A673 (cell line): ENCODE measurements at regions of chr9 and their contacts with region 1.

Region 1: DNA sequence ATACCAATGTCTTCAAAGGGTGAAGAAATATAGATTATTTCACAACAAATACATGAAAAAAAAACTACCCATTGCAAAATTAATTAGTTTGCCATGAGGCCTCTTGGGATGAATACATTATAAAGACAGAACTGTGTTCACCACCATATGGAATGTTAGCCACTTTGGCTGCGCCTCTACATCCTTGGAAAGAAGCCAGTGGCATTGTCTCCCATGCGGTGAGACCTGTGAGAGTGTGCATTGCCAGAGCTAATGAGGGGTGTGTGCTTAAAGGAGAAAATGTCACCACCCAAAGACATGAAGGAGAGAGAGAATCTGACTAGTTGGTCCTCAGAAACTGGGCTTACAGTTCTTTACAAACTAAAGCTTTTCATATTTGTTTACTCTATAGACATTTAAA is 110.6 kb downstream of the PLPPR1 start:
- DNase-seq: peak; percentile 3
- H3K4me3 ChIP-seq: no peak overlapping the region
- H3K27ac ChIP-seq: no peak overlapping the region
- H3K4me1 ChIP-seq: no peaks in the 10 kb centered on the region
- H3K27me3 ChIP-seq: no peaks in the 10 kb centered on the region
- CTCF ChIP-seq: no peak

Region 2: DNA sequence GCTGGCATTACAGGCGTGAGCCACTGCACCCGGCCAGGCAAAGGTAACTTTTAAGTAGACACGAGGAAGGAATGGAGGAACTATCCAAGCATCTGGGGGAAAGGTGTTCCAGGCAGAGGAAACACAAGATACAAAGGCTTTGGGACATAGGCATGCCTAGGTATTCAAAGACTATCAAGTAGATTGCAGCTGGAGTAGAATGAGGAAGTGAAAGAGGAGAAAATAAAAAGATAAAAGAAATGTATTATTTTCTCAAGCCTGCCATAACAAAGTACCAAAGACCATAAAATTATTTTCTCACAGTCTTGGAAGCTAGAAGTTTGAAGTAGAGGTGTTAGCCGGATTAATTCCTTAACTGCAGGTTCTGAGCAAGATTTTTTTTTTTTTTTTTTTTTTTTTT is 639.2 kb after region 1 on chr9:
- CTCF ChIA-PET with region 1: no interaction called
- POLR2A ChIA-PET with region 1: interaction called, 16 read pairs
- intact Hi-C with region 1: no loop called
- DNase-seq: no peak
- H3K4me3 ChIP-seq: no peak overlapping the region
- H3K27ac ChIP-seq: no peak overlapping the region
- H3K4me1 ChIP-seq: no peaks in the 10 kb centered on the region
- H3K27me3 ChIP-seq: no peaks in the 10 kb centered on the region
- CTCF ChIP-seq: no peak